ENCODE measurements at regions of chr1 and their contacts with region 1.

Region 1: DNA sequence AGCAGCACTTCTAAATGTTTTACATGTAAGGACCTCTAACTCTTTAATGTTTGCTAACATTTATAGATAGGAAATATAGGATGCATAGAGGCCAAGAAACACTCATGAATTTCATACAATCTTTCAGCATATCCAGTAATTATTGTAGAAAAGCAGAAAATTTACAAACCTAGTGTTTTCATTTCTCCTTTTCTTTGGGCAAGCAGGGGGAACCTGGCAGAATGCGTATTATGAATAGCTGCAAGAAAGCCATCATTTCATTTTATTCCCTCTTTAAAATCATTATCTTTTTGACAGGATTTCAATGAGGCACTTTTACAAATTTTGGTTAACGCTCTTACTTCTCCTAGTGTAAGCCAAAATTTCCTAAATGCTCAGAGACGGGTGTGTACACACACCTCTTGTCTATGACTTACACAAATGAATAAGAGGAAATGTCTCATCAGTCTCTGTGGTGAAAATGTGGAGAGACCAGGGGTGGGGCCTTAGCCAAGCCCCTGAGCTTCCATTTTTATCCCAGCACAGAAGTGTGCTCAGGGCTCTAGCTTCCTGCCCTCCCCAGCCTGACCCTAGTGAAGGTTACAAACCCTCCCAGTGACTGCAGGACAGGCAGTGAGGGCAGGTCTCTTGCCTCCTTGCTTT is 91.6 kb downstream of the LRRC8C start:
- DNase-seq: no peak

Region 2: DNA sequence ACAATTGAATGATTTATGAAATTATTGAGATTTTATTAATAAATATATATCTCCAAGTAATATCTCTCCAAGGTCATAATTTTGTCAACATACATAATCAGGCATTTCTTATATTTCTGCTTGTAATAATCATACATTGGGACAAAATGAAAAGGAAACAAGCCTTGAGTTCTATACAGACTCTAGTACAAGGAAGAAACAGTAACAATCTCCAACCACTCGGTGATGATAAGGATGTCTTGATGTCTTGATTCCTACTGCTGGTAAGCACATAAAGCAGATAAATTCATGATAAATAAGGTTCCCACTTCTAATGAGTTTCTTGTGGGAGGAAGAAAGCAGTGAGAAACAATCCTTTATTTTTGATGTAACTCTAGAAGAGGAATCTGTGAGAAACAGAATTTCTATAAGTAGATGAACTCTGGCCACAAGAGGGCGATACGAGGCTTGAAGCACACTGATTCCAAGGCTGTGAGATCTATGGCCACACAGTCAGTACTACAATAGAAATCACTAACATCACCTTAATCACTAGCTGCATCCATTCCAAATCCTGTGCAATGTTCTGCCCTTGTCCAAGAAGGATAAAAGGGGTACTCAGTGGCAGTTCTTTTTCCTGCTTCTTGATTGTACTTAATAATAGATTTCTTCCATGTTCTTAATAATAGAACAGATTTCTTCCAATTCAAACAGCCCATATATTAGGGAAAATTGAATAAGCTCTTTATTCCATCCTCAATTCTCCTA is 241.3 kb before region 1 on chr1:
- in situ Hi-C with region 1: loop called (anchors 25 kb)
- DNase-seq: peak; percentile 64